T-cell (primary cell): ENCODE measurements at regions of chr11 and their contacts with region 1.

Region 1: DNA sequence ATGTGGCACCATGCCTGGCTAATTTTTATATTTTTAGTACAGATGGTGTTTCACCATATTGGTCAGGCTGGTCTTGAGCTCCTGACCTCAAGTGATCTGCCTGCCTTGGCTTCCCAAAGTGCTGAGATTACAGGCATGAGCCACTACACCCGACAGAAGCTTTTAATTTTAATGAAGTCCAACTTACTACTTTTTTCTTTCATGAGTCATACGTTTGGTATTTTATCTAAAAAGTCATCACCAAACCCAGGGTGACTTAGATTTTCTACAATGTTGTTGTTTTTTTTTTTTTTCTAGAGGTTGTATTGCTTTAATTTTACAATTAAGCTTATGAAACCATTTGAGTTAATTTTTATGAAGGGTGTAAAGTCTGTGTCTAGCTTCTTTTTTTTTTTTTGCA is 34.9 kb downstream of the JRKL start:
- DNase-seq: no peak
- ATAC-seq: no peak
- H3K4me3 ChIP-seq: no peak overlapping the region
- H3K4me3 Mint-ChIP-seq: no peak overlapping the region
- H3K27ac ChIP-seq: no peak overlapping the region
- H3K27ac Mint-ChIP-seq: no peak overlapping the region
- H3K4me1 ChIP-seq: no peaks in the 10 kb centered on the region
- H3K4me1 Mint-ChIP-seq: peaks cover 0 to 2% (median 0%) of the 10 kb centered on the region in 3 donors
- H3K27me3 ChIP-seq: peaks cover 0 to 11% of the 10 kb centered on the region in 2 experiments
- H3K27me3 Mint-ChIP-seq: peaks cover 15 to 31% of the 10 kb centered on the region in 2 donors

Region 2: DNA sequence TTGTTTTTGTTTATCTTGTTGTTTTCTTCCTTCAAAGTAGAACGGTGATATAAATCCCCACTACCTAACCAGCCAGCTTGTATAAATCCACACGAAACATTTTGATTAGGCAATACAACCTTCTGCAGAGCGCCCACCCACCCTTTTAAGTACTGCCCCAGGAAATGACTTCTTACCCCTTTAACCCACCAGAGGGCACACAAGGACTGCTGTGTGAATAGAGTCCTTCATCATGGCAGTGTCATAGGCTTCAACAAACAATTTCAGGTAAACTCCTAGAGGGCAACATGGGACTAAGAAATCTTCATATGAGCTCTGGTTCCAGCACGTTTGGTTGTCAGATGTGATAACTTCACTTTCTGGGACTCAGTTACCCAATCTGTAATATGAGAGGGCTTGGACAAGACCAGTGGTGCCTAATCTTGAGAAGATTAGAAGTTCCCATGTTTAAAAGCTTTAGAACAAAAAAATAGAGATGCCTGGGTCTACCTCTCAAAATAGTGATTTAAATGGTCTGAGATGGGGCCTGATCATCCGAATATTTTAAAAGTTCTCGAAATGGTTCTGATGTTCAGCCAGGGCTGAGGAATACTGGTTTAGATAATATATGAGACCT is 1801.5 kb before region 1 on chr11:
- CTCF ChIA-PET with region 1: interaction called in 1 of 2 experiments, 14 read pairs
- POLR2A ChIA-PET with region 1: no interaction called
- DNase-seq: peak in 32 of 35 experiments; percentile 1 to 66 (median 23)
- ATAC-seq: peak; percentile 63 to 84 (median 66)
- H3K4me3 ChIP-seq: no peak overlapping the region
- H3K4me3 Mint-ChIP-seq: no peak overlapping the region
- H3K27ac ChIP-seq: no peak overlapping the region
- H3K27ac Mint-ChIP-seq: no peak overlapping the region
- H3K4me1 ChIP-seq: no peaks in the 10 kb centered on the region
- H3K4me1 Mint-ChIP-seq: peaks cover 0 to 4% (median 0%) of the 10 kb centered on the region in 3 donors
- H3K27me3 ChIP-seq: peaks cover 0 to 8% of the 10 kb centered on the region in 2 experiments
- H3K27me3 Mint-ChIP-seq: peaks cover 10% of the 10 kb centered on the region in 2 donors

Region 3: DNA sequence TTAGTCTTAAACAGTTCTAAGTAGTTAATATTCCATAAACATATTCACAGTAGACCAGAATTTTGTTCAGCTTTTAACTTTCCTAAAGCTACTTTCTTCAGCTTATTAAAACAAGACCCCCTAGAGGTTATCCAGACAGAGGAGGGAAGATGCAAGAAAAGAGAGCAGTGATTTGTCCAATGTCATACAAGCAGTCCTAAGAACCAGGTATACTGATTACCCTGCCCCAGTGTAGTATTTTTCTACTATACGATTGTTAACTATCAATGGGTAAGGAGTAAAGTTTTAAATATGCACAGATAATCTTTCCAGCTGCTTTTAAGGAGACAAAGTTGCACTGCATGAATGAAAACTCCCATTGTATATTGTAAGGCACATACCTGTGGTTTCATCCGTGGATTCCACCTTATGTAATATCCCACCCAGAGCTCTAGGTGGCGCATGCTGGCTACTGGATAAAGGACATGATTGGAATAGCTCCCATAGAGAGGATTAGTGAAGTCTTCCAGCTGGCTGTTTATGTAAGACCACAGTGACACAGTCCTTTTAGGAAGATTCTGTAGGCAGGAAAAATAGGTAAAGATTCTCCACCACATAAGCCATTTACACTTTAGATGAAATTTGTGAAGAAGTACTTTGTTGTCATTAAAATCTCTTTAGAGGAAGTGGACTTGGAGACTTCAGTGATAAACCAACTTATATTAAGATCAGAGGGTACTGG is 588.8 kb before region 1 on chr11:
- CTCF ChIA-PET with region 1: interaction called, 10 to 21 read pairs
- POLR2A ChIA-PET with region 1: no interaction called
- DNase-seq: peak; percentile 9 to 70 (median 46)
- ATAC-seq: peak; percentile 82 to 88 (median 86)
- H3K4me3 ChIP-seq: no peak overlapping the region
- H3K4me3 Mint-ChIP-seq: no peak overlapping the region
- H3K27ac ChIP-seq: no peak overlapping the region
- H3K27ac Mint-ChIP-seq: no peak overlapping the region
- H3K4me1 ChIP-seq: no peaks in the 10 kb centered on the region
- H3K4me1 Mint-ChIP-seq: no peaks in the 10 kb centered on the region
- H3K27me3 ChIP-seq: no peaks in the 10 kb centered on the region
- H3K27me3 Mint-ChIP-seq: no peaks in the 10 kb centered on the region

Region 4: DNA sequence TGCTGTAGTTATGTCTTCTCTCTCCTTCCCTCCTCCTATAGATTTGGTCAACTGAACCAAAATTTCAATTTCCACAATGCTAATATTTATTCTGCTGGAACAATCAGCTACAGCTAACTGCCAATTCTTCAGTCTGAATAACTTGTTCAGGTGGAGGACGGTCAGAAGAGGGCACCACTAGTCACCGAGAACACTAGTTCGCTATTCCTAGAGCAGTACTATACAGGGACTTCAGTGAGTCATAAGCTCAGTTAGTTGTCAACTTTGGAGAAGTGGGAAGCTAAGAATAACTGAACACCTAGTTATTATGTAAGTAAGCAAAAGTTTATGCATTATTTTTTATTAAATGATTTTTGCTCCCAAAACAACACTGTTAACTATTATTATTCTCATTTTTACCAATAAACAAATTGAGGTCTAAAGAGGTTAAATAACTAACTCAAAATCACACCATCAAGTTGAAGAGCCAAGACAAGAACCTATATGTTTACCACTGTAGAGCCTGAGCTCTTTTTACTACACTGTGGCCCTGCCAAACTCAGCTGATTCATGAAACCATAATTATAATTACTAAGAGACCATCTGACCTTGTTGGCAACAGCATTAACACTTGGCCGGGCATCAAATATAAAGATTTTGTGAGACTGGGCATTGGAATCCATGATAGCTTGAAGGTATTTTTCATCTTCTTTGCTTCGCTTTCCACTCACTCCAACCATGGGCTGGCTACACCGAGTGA is 575.4 kb before region 1 on chr11:
- CTCF ChIA-PET with region 1: interaction called, 8 to 11 read pairs
- POLR2A ChIA-PET with region 1: no interaction called
- DNase-seq: peak in 12 of 35 experiments; percentile 0 to 41 (median 4)
- ATAC-seq: peak; percentile 35 to 58 (median 51)
- H3K4me3 ChIP-seq: no peak overlapping the region
- H3K4me3 Mint-ChIP-seq: no peak overlapping the region
- H3K27ac ChIP-seq: no peak overlapping the region
- H3K27ac Mint-ChIP-seq: no peak overlapping the region
- H3K4me1 ChIP-seq: no peaks in the 10 kb centered on the region
- H3K4me1 Mint-ChIP-seq: no peaks in the 10 kb centered on the region
- H3K27me3 ChIP-seq: no peaks in the 10 kb centered on the region
- H3K27me3 Mint-ChIP-seq: no peaks in the 10 kb centered on the region